Prostate gland (tissue), 2 donors: ENCODE measurements at regions of chr6 and their contacts with region 1.

Region 1: GRCh38 chr6:129359811-129360681 is 349.9 kb downstream of the ARHGAP18 start:
- DNase-seq: no peak
- H3K4me3 ChIP-seq: no peak overlapping the region
- H3K27ac ChIP-seq: no peak overlapping the region
- H3K4me1 ChIP-seq: no peaks in the 10 kb centered on the region
- H3K27me3 ChIP-seq: no peaks in the 10 kb centered on the region
- CTCF ChIP-seq: no peak
- POLR2A ChIP-seq: no peak

Region 2: GRCh38 chr6:128725271-128726233 is 634.5 kb before region 1 on chr6:
- intact Hi-C with region 1: loop called (anchors 10 kb)
- DNase-seq: no peak
- H3K4me3 ChIP-seq: no peak overlapping the region
- H3K27ac ChIP-seq: no peak overlapping the region
- H3K4me1 ChIP-seq: no peaks in the 10 kb centered on the region
- H3K27me3 ChIP-seq: no peaks in the 10 kb centered on the region
- CTCF ChIP-seq: peak in 3 of 4 experiments; percentile 41 to 52 (median 48)
- POLR2A ChIP-seq: no peak